GM12878 (cell line): ENCODE measurements at regions of chr6 and their contacts with region 1.

Region 1: DNA sequence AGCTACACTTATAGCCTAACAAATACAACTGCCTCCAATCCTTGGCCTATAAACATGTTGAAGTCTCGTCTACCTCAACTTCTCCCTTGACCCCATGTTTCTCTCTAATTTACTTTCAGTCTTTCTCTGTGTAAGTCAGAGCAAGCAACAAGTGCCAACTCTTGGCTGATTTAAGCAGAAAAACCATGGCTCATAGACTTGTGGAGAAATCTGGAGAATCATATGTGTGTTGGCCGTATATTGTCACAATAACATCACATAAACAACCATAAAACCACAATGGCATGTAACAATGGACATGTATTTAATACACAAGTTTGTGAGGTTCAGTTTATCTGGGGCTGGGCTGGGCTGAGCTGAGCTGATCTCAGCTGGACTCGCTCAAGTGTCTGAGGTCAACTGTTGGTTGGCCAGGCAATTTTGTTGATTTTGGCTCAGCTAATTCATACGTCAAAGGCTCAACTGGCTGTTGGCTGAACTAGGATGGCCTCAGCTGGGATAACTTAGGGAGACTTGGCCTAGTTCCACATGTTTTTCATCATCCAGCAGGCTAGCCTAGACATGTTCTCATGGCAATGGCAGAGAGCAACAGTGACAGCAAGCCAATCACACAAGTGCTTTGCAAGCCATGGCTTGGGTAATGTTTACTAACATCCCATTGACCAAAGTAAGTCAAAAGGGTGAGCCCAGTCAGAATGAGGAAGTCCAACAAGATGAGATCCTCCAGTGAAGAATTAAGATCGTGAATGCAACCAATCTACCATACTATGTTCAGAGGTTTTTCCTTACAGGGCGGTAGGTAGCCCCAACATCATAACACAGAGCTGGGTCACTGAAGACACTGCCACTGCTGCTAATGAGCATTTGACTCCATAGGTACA is 12.9 kb upstream of the TBC1D22B start:
- DNase-seq: no peak
- ATAC-seq: no peak
- H3K4me3 ChIP-seq: no peak overlapping the region
- H3K27ac ChIP-seq: no peak overlapping the region
- H3K4me1 ChIP-seq: peaks cover 8% of the 10 kb centered on the region; the same call in 1 of the 2 replicates
- H3K27me3 ChIP-seq: no peaks in the 10 kb centered on the region
- CTCF ChIP-seq: no peak
- EP300 ChIP-seq: no peak
- POLR2A ChIP-seq: no peak
- RAD21 ChIP-seq: no peak

Region 2: DNA sequence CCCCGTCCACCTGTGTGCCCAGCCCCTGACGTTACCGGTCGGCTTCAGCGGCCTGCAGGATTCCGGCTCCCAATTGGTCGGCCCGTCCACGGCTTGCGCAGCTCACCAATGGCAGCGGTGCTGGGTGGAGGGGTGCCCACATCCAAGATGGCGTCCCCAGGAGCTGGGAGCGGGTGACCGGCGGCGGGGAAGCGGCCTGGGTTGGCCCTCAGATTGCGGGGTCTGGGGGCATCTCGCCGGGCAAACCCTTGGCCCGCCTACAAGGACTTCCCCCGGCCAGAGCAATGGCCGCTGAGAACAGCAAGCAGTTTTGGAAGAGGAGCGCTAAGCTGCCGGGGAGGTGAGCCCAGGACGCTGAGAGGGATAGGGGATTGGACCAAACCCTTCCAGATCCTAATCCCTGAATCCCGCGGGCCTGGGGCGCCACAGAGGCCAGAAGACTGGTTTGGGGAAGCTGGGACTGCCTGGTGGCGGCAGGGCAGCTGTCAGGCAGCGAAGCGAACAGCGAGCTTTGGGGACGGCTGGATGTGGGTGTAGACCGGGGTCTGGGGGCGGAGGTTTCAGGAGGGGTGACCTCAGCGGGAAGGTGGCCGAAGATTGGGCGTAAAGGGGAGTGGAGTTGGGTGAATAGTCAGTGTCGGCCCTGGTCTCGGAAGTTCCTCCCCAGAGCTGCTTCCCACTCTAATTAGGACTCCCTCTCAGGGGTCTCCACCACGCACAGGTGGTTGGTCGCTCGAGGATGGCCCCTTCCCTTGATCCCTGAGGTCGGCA is 13.1 kb after region 1 on chr6 and contains the starts of genes TBC1D22B and TMEM217:
- CTCF ChIA-PET with region 1: interaction called, 6 read pairs
- POLR2A ChIA-PET with region 1: interaction called, 6 read pairs
- RAD21 ChIA-PET with region 1: interaction called, 5 read pairs
- SMC1A ChIA-PET with region 1: interaction called, 12 read pairs
- in situ Hi-C with region 1: no loop called
- intact Hi-C with region 1: no loop called
- DNase-seq: peak; percentile 81
- ATAC-seq: peak; percentile 98
- H3K4me3 ChIP-seq: peak within 1 kb of the TSS; percentile 84
- H3K27ac ChIP-seq: peak within 1 kb of the TSS; percentile 95
- H3K4me1 ChIP-seq: peaks cover 11% of the 10 kb centered on the region
- H3K27me3 ChIP-seq: no peaks in the 10 kb centered on the region
- CTCF ChIP-seq: no peak
- EP300 ChIP-seq: no peak
- POLR2A ChIP-seq: peak; percentile 91
- RAD21 ChIP-seq: no peak
- polyA plus RNA-seq, gene TBC1D22B: 3.4 to 3.7 TPM
- polyA plus RNA-seq, gene TMEM217: 1.3 to 2.1 TPM

Region 3: GRCh38 chr6:37559501-37559900 is 314.8 kb after region 1 on chr6:
- CTCF ChIA-PET with region 1: no interaction called
- POLR2A ChIA-PET with region 1: no interaction called
- RAD21 ChIA-PET with region 1: no interaction called
- SMC1A ChIA-PET with region 1: no interaction called
- in situ Hi-C with region 1: no loop called
- intact Hi-C with region 1: no loop called
- DNase-seq: no peak
- ATAC-seq: no peak
- H3K4me3 ChIP-seq: peak overlapping the region; percentile 11; the same call in 1 of the 2 replicates
- H3K27ac ChIP-seq: peak overlapping the region; percentile 91
- H3K4me1 ChIP-seq: peaks cover 88% of the 10 kb centered on the region
- H3K27me3 ChIP-seq: no peaks in the 10 kb centered on the region
- CTCF ChIP-seq: no peak
- EP300 ChIP-seq: no peak
- POLR2A ChIP-seq: no peak
- RAD21 ChIP-seq: no peak